Adrenal gland (tissue), 19 donors: ENCODE measurements at regions of chr3 and their contacts with region 1.

Region 1: DNA sequence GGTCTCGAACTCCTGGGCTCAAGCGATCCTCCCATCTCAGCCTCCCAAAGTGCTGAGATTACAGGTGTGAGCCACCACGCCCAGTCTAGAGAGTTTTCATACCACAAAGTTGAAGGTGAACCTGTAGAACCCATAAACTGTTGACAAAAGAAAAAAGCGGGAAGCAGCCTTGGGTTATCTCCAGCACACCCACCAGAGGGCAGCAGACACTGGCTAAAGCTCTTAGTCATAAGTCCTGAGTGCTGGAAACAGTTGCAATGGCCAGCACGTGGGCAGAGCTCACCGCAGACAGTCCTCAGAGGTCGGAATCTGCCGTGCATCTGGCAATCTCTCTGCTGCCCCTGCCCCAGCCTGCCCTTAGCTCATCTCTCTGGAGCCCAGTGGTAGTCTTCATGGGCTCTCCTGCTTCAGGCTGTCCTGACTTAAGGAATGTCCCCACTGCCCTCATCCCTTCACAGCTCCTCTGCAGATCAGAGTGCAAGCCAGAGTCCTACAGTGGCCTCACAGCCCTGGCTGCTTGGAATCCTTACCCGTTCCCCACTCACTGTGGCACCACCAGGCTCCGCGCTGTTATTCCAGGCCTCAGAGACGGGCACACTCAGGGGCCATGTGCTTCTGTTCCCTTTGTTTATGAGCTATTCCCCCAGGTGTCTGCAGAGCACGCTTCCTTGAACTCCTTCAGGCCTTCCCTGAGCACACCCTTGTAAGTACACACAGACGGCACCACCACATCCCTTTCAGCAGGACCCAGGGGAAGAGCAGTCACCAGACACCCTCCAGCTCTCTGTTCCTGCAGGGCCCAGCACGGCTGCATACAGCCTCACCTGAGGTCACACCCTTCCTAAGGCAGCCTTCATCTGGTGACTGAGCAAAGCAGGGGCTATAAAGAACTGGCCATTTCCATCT is 8.8 kb upstream of the ELP6 start:
- DNase-seq: peak; percentile 80 to 96 (median 88)
- H3K4me3 ChIP-seq: no peak overlapping the region
- H3K27ac ChIP-seq: no peak overlapping the region
- H3K4me1 ChIP-seq: no peaks in the 10 kb centered on the region
- H3K27me3 ChIP-seq: no peaks in the 10 kb centered on the region
- CTCF ChIP-seq: peak; percentile 79 to 97 (median 95)
- POLR2A ChIP-seq: no peak

Region 2: GRCh38 chr3:47096959-47097358 is 425.4 kb before region 1 on chr3:
- intact Hi-C with region 1: no loop called
- DNase-seq: no peak
- H3K4me3 ChIP-seq: no peak overlapping the region
- H3K27ac ChIP-seq: peak overlapping the region in 1 of 5 donors; percentile 10
- H3K4me1 ChIP-seq: peaks cover 0 to 8% of the 10 kb centered on the region in 2 donors
- H3K27me3 ChIP-seq: no peaks in the 10 kb centered on the region
- CTCF ChIP-seq: no peak
- POLR2A ChIP-seq: no peak

Region 3: DNA sequence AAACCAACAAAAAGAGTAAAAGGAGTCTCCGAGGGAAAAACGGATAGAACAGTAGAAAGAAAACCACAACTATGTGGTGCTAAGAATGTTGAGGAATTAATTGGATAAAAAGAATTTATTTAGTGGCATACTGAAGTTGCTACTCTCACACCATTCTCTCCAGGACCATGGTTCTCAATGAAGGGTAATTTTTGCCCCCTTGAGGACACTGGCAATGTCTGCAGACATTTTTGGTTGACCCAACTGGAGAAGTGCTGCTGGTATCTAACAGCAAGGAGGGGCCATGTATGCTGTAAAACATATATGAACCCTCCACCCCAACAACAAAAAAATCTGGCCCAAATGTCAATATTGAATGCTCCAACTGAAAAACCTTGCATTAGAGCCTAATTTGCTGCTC is 142.2 kb after region 1 on chr3:
- intact Hi-C with region 1: loop called in 1 of 2 experiments (anchors 10 kb)
- DNase-seq: no peak
- H3K4me3 ChIP-seq: no peak overlapping the region
- H3K27ac ChIP-seq: no peak overlapping the region
- H3K4me1 ChIP-seq: no peaks in the 10 kb centered on the region
- H3K27me3 ChIP-seq: no peaks in the 10 kb centered on the region
- CTCF ChIP-seq: peak in 2 of 6 experiments; percentile 12 to 13
- POLR2A ChIP-seq: no peak

Region 4: DNA sequence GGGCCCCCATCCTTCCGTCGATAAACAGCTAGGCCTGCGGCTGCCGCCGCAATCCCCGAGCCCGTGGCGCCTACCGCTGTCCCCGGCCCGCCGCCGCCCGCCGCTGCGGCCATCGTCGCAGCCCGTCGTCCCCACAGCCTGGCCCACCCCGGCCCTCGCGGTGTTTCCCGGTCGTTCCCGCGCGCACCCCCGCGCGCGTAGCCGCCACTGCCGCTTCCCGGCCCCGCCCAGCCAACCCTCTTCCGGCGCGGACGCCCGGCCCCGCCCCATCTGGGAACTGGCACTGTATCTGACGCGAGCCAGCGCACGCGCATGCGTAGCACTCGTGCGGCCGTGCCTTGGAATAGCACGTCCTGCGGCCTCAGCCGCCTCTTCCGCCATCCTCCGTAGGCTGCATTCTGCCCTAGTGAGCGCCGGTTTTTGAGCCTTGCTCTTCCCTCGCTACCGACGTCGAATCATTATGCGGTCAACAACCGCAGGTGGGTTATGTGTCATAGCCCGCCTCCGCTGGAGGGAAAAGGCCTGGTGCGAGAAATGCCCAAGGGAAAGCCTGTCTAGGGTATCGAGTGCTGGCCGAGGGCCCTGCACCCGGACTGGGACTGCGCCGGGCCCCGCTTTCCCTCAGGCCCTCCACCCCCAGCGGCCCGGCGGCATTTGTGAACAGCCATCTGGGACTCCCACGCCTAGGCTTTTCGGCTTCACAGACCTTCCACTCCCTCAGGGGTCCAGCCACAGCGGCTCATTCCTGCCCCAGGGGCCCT is 259.5 kb after region 1 on chr3 and contains the start of gene SMARCC1:
- intact Hi-C with region 1: loop called in 1 of 2 experiments (anchors 5 kb)
- DNase-seq: peak; percentile 97 to 99 (median 98)
- H3K4me3 ChIP-seq: peak within 1 kb of the TSS; percentile 34 to 85 (median 64)
- H3K27ac ChIP-seq: peak within 1 kb of the TSS; percentile 89 to 99 (median 96)
- H3K4me1 ChIP-seq: peaks cover 0 to 26% of the 10 kb centered on the region in 2 donors
- H3K27me3 ChIP-seq: no peaks in the 10 kb centered on the region
- CTCF ChIP-seq: peak in 3 of 6 experiments; percentile 14 to 25 (median 18)
- POLR2A ChIP-seq: peak; percentile 89 to 94
- total RNA-seq, gene SMARCC1: 12.1 to 47.4 (median 29.6) TPM

Region 5: GRCh38 chr3:47791193-47791855 is 269.0 kb after region 1 on chr3:
- intact Hi-C with region 1: loop called (anchors 2 to 5 kb)
- DNase-seq: no peak
- H3K4me3 ChIP-seq: no peak overlapping the region
- H3K27ac ChIP-seq: no peak overlapping the region
- H3K4me1 ChIP-seq: no peaks in the 10 kb centered on the region
- H3K27me3 ChIP-seq: no peaks in the 10 kb centered on the region
- CTCF ChIP-seq: no peak
- POLR2A ChIP-seq: no peak